GM12878 (cell line): ENCODE measurements at regions of chr3 and their contacts with region 1.

Region 1: DNA sequence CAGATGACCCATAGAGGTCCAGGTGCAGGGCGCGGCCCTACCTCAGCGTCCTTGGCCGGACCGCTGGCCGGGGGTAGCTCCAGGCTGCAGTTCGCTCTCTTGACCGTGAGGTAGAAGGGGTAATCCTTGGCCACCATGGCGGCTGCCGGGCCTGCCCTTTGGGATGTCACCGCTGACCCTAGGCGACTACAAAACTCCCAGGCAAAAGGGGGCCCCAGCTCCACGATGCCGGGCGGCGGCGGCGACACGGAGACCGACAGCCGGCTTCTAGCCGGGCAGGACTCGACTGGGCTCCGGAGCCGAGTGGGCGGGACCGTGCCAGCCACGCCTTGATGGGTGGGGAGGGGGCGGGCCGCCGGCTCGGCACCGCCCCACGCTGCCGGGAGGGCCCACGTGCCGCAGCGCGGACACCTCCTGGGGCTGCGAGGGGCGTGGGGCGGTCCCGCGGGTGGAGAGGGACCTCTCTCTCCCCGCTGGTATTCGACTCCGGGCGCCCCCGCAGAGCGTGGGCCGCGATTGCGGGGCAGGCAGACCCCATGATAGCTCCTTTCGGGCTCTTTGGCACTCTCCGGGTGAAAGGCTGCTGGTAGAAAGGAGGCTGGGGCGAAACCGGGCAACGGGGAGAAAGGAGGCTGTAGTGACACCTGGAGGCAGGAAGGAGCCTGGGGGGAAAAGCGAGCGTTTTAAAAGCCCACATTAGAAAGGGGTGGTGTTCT is at the start of gene ARHGEF3:
- DNase-seq: no peak
- ATAC-seq: peak; percentile 91
- H3K4me3 ChIP-seq: peak within 1 kb of the TSS; percentile 71
- H3K27ac ChIP-seq: peak within 1 kb of the TSS; percentile 54
- H3K4me1 ChIP-seq: peaks cover 6% of the 10 kb centered on the region
- H3K27me3 ChIP-seq: no peaks in the 10 kb centered on the region
- CTCF ChIP-seq: peak; percentile 70 to 81 (median 75)
- EP300 ChIP-seq: no peak
- POLR2A ChIP-seq: peak; percentile 77
- RAD21 ChIP-seq: peak; percentile 67
- polyA plus RNA-seq, gene ARHGEF3: 21.8 to 31.1 TPM

Region 2: DNA sequence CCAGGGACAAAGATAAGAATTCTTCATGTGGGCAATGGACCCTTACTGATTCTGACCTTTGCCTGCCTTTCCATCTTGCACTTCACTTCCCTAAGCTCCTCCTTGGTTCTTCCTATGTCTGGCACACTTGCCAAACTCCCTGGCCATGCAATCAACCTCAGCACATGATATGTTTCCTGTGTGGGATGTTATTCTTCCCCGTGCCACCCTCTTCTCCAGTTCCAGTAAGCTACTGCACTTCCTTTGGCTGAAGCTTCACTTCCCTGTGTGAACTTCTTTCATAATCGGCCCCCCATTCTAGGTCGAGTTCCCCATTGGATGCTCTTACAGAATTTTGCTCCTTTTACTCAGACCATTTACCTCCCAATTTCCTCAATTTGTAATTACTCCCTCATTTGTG is 108.1 kb before region 1 on chr3:
- CTCF ChIA-PET with region 1: interaction called, 429 read pairs
- POLR2A ChIA-PET with region 1: interaction called, 43 read pairs
- RAD21 ChIA-PET with region 1: interaction called, 96 read pairs
- SMC1A ChIA-PET with region 1: interaction called, 75 read pairs
- in situ Hi-C with region 1: no loop called
- intact Hi-C with region 1: no loop called
- DNase-seq: no peak
- ATAC-seq: no peak
- H3K4me3 ChIP-seq: no peak overlapping the region
- H3K27ac ChIP-seq: no peak overlapping the region
- H3K4me1 ChIP-seq: peaks cover 12% of the 10 kb centered on the region
- H3K27me3 ChIP-seq: no peaks in the 10 kb centered on the region
- CTCF ChIP-seq: no peak
- EP300 ChIP-seq: no peak
- POLR2A ChIP-seq: no peak
- RAD21 ChIP-seq: no peak

Region 3: DNA sequence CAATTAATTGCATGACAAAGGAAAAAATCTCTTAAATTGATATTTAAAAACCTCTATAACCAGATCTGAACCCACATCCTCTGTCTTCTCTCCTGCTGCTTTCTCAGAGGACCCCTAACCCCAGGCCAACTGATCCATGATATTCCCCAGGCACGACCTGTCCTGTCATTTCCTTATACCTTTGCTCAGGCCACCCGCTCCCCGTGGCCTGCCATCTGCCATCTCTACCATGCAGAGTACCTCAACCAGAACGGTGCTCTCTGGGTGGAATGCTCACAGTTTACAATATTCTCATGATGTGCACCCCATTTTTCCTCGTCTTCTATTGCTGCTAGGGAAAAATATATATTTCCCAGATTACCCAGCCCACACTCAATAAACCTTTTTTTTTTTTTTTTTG is 57.8 kb before region 1 on chr3:
- CTCF ChIA-PET with region 1: interaction called, 244 read pairs
- POLR2A ChIA-PET with region 1: interaction called, 6 read pairs
- RAD21 ChIA-PET with region 1: interaction called, 9 read pairs
- SMC1A ChIA-PET with region 1: interaction called, 383 read pairs
- in situ Hi-C with region 1: no loop called
- intact Hi-C with region 1: no loop called
- DNase-seq: no peak
- ATAC-seq: no peak
- H3K4me3 ChIP-seq: no peak overlapping the region
- H3K27ac ChIP-seq: no peak overlapping the region
- H3K4me1 ChIP-seq: no peaks in the 10 kb centered on the region
- H3K27me3 ChIP-seq: no peaks in the 10 kb centered on the region
- CTCF ChIP-seq: no peak
- EP300 ChIP-seq: no peak
- POLR2A ChIP-seq: no peak
- RAD21 ChIP-seq: no peak

Region 4: GRCh38 chr3:56783644-56784447 is 18.0 kb before region 1 on chr3:
- CTCF ChIA-PET with region 1: interaction called, 160 read pairs
- POLR2A ChIA-PET with region 1: interaction called, 100 read pairs
- RAD21 ChIA-PET with region 1: interaction called, 245 read pairs
- SMC1A ChIA-PET with region 1: interaction called, 383 read pairs
- in situ Hi-C with region 1: no loop called
- intact Hi-C with region 1: no loop called
- DNase-seq: peak; percentile 93
- ATAC-seq: peak; percentile 92
- H3K4me3 ChIP-seq: peak overlapping the region; percentile 30; the same call in 1 of the 2 replicates
- H3K27ac ChIP-seq: peak overlapping the region; percentile 94
- H3K4me1 ChIP-seq: peaks cover 67% of the 10 kb centered on the region
- H3K27me3 ChIP-seq: no peaks in the 10 kb centered on the region
- CTCF ChIP-seq: no peak
- EP300 ChIP-seq: peak; percentile 76 to 84
- POLR2A ChIP-seq: peak; percentile 45; the same call in 1 of the 2 replicates
- RAD21 ChIP-seq: peak; percentile 25; the same call in 1 of the 2 replicates

Region 5: GRCh38 chr3:56862352-56863074 is 60.7 kb after region 1 on chr3:
- CTCF ChIA-PET with region 1: interaction called, 7 read pairs
- POLR2A ChIA-PET with region 1: no interaction called
- RAD21 ChIA-PET with region 1: interaction called, 7 read pairs
- SMC1A ChIA-PET with region 1: interaction called, 23 read pairs
- in situ Hi-C with region 1: no loop called
- intact Hi-C with region 1: no loop called
- DNase-seq: no peak
- ATAC-seq: peak; percentile 73
- H3K4me3 ChIP-seq: no peak overlapping the region
- H3K27ac ChIP-seq: no peak overlapping the region; the same call in 1 of the 2 replicates
- H3K4me1 ChIP-seq: peaks cover 23% of the 10 kb centered on the region
- H3K27me3 ChIP-seq: no peaks in the 10 kb centered on the region
- CTCF ChIP-seq: no peak
- EP300 ChIP-seq: no peak; a peak in 1 of 4 replicates
- POLR2A ChIP-seq: no peak
- RAD21 ChIP-seq: 0 out of 2 replicates have a peak, but pooled peaks have one; percentile 9

Region 6: DNA sequence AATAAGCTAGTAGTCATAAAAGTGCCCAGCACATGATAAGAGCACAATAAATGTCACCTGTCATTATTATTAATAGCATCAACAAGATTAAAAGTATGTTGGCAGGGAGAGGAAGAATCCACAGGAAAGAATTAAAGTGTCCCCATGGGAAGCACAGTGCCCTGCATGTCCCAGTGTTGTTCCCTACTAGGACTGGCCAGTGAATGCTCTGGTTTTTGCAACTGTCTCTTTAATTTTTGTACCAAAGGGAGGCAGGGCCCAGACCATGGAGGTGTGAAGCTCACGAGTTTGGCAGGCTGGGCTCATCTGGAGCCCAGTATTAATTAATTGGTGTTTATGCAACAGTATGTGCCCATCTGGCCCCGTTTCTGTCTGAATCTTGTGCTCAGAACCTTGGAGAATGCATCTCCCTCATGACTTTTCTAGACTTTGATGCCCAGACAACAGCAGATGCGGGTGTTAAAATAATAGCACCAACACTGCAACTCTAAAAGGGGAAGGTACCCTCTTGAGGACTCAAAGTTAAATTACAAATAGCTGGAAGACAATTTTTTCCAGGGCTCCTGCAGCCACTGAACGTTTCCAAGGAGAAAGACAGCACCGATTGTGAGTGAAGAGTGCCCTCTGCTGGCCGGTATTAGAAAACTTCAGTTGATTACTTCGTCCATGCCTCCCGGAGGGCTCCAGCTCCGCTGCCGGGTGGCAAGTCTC is 186.8 kb after region 1 on chr3:
- CTCF ChIA-PET with region 1: interaction called, 220 read pairs
- POLR2A ChIA-PET with region 1: interaction called, 5 read pairs
- RAD21 ChIA-PET with region 1: interaction called, 206 read pairs
- SMC1A ChIA-PET with region 1: interaction called, 166 read pairs
- in situ Hi-C with region 1: no loop called
- intact Hi-C with region 1: loop called (anchors 1 kb)
- DNase-seq: no peak
- ATAC-seq: peak; percentile 86
- H3K4me3 ChIP-seq: no peak overlapping the region
- H3K27ac ChIP-seq: no peak overlapping the region
- H3K4me1 ChIP-seq: no peaks in the 10 kb centered on the region
- H3K27me3 ChIP-seq: peaks cover 0 to 6% of the 10 kb centered on the region in 2 experiments; a peak in 3 of 4 replicates
- CTCF ChIP-seq: peak; percentile 66 to 83 (median 70)
- EP300 ChIP-seq: no peak
- POLR2A ChIP-seq: no peak
- RAD21 ChIP-seq: peak; percentile 97